ENCODE measurements at regions of chr19 and their contacts with region 1.

Region 1: DNA sequence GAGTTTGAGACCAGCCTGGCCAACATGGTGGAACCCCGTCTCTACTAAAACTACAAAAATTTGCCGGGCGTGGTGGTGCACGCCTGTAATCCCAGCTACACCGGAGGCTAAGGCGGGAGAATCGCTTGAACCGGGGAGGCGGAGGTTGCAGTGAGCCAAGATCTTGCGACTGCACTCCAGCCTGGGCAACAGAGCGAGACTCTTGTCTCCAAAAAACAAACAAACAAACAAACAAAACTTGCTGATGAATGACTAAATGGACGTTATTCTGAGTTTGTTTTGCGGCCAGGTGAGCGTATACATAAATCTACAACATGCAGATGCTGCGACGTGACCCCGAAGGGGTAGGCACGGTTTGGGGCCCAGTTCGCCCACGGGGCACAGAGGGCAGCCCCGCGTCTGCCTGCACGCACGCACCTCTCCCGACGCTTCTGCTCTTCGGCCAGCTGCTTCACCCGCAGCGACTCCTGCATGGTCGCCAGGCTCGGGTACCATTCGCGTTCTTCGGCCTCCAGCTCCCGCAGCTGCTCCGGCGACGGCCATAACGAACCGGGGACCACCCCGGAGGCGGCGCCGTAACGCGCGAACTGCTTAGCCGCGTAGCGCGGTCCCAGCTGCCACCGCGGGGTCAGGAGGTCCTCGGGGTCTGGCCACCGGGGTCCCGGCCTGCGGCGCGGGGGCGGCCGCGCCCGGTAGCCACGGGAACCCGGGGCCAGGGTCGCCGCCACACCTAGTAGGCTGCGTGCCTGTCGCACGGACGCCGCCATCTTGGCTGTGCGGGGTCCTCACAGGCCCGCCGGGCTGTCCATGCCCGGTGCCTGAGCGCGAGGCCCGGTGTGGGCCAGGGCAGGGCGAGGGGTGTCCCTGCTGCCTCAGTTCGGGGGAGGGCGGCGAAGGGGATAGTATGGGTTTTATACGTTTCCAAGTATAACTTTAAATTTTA is at the start of gene GADD45GIP1:
- DNase-seq: peak; percentile 78
- ATAC-seq: peak; percentile 98
- H3K4me3 Mint-ChIP-seq: peak within 1 kb of the TSS; percentile 91
- H3K27ac Mint-ChIP-seq: peak within 1 kb of the TSS; percentile 97
- H3K4me1 Mint-ChIP-seq: peaks cover 33% of the 10 kb centered on the region
- H3K27me3 Mint-ChIP-seq: no peaks in the 10 kb centered on the region
- CTCF ChIP-seq: no peak
- total RNA-seq, gene GADD45GIP1: 16.7 and 19.6 TPM in 2 replicates

Region 2: DNA sequence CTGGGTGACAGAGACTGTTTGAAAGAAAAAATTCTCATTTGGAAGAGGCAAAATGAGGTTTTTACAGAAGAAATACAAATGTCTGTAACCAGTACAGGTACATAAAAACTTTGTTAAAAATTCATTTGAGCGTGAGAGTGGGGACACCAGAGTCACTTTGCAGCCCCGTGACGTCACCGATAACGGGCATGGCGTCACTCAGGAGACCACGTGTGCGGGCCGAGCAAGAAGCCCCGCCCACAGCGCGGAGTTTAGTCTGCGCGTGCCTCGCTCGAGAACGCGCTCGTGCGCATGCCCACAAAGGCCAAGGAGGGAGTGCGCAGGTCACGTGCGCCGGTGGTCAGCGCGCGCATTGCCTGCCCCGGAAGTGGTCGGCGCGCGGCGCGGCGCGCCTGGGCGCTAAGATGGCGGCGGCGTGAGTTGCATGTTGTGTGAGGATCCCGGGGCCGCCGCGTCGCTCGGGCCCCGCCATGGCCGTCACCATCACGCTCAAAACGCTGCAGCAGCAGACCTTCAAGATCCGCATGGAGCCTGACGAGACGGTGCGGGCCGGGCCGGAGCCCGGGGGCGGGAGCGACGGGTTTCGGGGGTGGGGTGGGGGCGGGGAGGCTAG is 11.1 kb before region 1 on chr19 and contains the start of gene RAD23A:
- CTCF ChIA-PET with region 1: no interaction called
- POLR2A ChIA-PET with region 1: interaction called, 24 read pairs
- intact Hi-C with region 1: loop called (anchors 1 kb)
- DNase-seq: peak; percentile 99
- ATAC-seq: peak; percentile 80
- H3K4me3 Mint-ChIP-seq: peak within 1 kb of the TSS; percentile 93
- H3K27ac Mint-ChIP-seq: peak within 1 kb of the TSS; percentile 92
- H3K4me1 Mint-ChIP-seq: peaks cover 56% of the 10 kb centered on the region
- H3K27me3 Mint-ChIP-seq: no peaks in the 10 kb centered on the region
- CTCF ChIP-seq: no peak
- total RNA-seq, gene RAD23A: 106 and 112 TPM in 2 replicates